Uterus (tissue), 4 donors: ENCODE measurements at regions of chr6 and their contacts with region 1.

Region 1: GRCh38 chr6:156776840-156777576 is at the start of gene ARID1B:
- DNase-seq: peak; percentile 82 to 84
- H3K4me3 ChIP-seq: peak within 1 kb of the TSS; percentile 53 to 95
- H3K27ac ChIP-seq: peak within 1 kb of the TSS; percentile 99 to 100
- H3K4me1 ChIP-seq: no peaks in the 10 kb centered on the region
- H3K27me3 ChIP-seq: no peaks in the 10 kb centered on the region
- CTCF ChIP-seq: no peak
- POLR2A ChIP-seq: peak in 1 of 2 donors; percentile 56
- total RNA-seq, gene ARID1B: 63.8 to 198 (median 125) TPM

Region 2: DNA sequence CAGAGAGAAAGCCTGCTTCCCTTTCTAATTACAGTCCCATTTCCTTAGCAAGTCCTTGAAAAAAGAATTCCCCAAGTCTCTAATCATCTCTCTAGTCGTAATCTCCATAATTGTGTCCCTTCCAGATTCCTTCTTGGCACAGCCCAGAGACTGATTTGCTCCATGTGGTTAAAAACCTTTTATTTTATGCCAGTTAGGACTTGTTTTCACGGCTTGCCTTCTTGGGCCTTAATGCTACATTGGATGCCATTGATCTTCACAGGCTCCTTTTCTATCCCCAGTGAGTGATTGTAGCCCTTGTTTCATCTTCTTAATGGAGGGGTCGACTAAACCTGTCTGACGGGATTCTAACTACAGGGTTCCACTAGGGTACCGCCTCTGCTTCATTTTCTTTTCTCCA is 650.5 kb before region 1 on chr6:
- intact Hi-C with region 1: no loop called
- DNase-seq: no peak
- H3K4me3 ChIP-seq: no peak overlapping the region
- H3K27ac ChIP-seq: no peak overlapping the region
- H3K4me1 ChIP-seq: no peaks in the 10 kb centered on the region
- H3K27me3 ChIP-seq: no peaks in the 10 kb centered on the region
- CTCF ChIP-seq: no peak
- POLR2A ChIP-seq: no peak

Region 3: DNA sequence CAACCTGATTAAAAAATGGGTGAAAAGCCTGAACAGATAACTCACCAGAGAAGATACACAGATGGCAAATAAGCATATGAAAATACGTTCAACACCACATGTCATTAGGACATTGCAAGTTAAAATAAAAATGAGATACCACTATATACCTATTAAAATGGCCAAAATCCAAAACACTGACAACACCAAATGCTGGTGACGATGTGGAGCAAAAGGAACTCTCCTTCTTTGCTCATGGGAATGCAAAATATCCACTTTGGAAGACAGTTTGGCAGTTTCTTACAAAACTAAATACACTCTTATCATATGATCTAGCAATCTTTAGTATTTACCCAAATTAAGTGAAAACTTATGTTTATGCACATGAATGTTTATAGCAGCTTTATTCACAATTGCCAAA is 100.3 kb before region 1 on chr6:
- intact Hi-C with region 1: no loop called
- DNase-seq: no peak
- H3K4me3 ChIP-seq: no peak overlapping the region
- H3K27ac ChIP-seq: no peak overlapping the region
- H3K4me1 ChIP-seq: no peaks in the 10 kb centered on the region
- H3K27me3 ChIP-seq: no peaks in the 10 kb centered on the region
- CTCF ChIP-seq: no peak
- POLR2A ChIP-seq: no peak

Region 4: GRCh38 chr6:156686995-156687788 is 89.8 kb before region 1 on chr6:
- intact Hi-C with region 1: loop called (anchors 5 kb)
- DNase-seq: peak; percentile 91 to 93
- H3K4me3 ChIP-seq: peak overlapping the region; percentile 57 to 83
- H3K27ac ChIP-seq: peak overlapping the region; percentile 96 to 99
- H3K4me1 ChIP-seq: no peaks in the 10 kb centered on the region
- H3K27me3 ChIP-seq: no peaks in the 10 kb centered on the region
- CTCF ChIP-seq: peak in 2 of 4 experiments; percentile 4 to 16
- POLR2A ChIP-seq: peak; percentile 63 to 77

Region 5: GRCh38 chr6:157021344-157021992 is 244.5 kb after region 1 on chr6:
- intact Hi-C with region 1: loop called (anchors 2 kb)
- DNase-seq: peak; percentile 90 to 92
- H3K4me3 ChIP-seq: peak overlapping the region; percentile 73 to 88
- H3K27ac ChIP-seq: peak overlapping the region; percentile 97 to 99
- H3K4me1 ChIP-seq: peaks cover 0 to 21% of the 10 kb centered on the region in 2 donors
- H3K27me3 ChIP-seq: no peaks in the 10 kb centered on the region
- CTCF ChIP-seq: peak in 3 of 4 experiments; percentile 23 to 49 (median 47)
- POLR2A ChIP-seq: peak; percentile 96